ENCODE measurements at regions of chr9 and their contacts with region 1.

Region 1: GRCh38 chr9:70111042-70111602 is 67.5 kb downstream of the MAMDC2 start:
- DNase-seq: peak; percentile 76 to 88 (median 79)
- ATAC-seq: peak; percentile 47 to 87 (median 84)
- H3K4me3 ChIP-seq: no peak overlapping the region
- H3K27ac ChIP-seq: peak overlapping the region in 8 of 12 donors; percentile 7 to 61 (median 19)
- H3K4me1 ChIP-seq: peaks cover 0 to 17% (median 3%) of the 10 kb centered on the region in 12 donors
- H3K27me3 ChIP-seq: no peaks in the 10 kb centered on the region
- CTCF ChIP-seq: peak; percentile 70 to 95 (median 84)
- POLR2A ChIP-seq: no peak

Region 2: GRCh38 chr9:69971643-69972449 is 139.3 kb before region 1 on chr9:
- intact Hi-C with region 1: loop called (anchors 1 to 2 kb)
- DNase-seq: peak; percentile 54 to 82 (median 71)
- ATAC-seq: peak; percentile 50 to 86 (median 76)
- H3K4me3 ChIP-seq: no peak overlapping the region
- H3K27ac ChIP-seq: no peak overlapping the region
- H3K4me1 ChIP-seq: peaks cover 0 to 10% (median 4%) of the 10 kb centered on the region in 12 donors
- H3K27me3 ChIP-seq: no peaks in the 10 kb centered on the region
- CTCF ChIP-seq: peak; percentile 67 to 94 (median 84)
- POLR2A ChIP-seq: no peak

Region 3: DNA sequence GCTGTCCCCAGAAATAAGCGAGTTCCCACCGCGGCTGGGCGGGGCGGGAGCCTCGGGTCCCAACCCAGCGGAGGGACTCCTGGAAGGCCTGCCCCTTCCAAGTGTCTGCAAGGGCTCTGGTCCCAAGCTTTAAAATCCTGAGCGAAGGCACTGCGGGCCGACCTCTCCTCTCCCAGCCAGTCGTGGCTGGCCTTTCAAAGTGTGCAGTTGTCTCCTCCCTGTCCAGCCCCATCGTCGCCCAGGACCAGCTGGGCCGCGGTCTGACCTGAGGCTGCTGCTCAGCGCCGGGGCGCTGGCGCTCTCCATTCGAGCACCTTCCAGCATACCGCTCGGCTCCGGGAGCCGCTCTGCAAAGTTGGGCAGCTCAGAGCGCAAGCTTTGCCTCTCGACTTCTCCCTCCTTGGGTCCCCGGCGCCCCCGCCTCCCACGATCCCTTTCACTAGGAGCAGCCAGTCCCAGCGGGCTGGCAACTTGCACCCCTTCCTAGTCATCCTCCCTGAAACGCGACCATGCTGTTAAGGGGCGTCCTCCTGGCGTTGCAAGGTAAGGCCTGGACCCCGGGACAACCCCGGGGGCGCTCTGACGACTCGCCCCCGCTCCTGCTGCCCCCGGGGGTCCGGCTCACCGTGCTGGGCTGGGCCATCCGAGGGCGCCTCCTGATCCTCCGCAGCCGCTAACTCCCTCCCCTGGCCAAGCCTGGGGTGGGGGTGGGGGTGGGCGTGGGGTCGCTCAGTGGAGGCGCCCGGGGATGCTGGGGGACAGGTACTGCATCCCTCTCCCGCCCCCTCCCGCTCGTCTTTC is 67.2 kb before region 1 on chr9 and contains the start of gene MAMDC2:
- intact Hi-C with region 1: loop called in 2 of 10 experiments (anchors 5 to 10 kb)
- DNase-seq: peak; percentile 51 to 84 (median 61)
- ATAC-seq: peak; percentile 48 to 85 (median 82)
- H3K4me3 ChIP-seq: peak within 1 kb of the TSS; percentile 38 to 78 (median 56)
- H3K27ac ChIP-seq: peak within 1 kb of the TSS in 11 of 12 donors; percentile 59 to 92 (median 77)
- H3K4me1 ChIP-seq: peaks cover 0 to 48% (median 28%) of the 10 kb centered on the region in 12 donors
- H3K27me3 ChIP-seq: peaks cover 0 to 8% (median 0%) of the 10 kb centered on the region in 9 donors
- CTCF ChIP-seq: no peak
- POLR2A ChIP-seq: peak in 1 of 2 donors; percentile 50
- total RNA-seq, gene MAMDC2: 2.5 to 23.9 (median 5.2) TPM